ENCODE measurements at regions of chr19 and their contacts with region 1.

Region 1: GRCh38 chr19:2016041-2016807 is 710 bp upstream of the BTBD2 start:
- DNase-seq: peak in 9 of 10 donors; percentile 39 to 77 (median 67)
- H3K4me3 ChIP-seq: peak overlapping the region in 55 of 59 donors; percentile 12 to 73 (median 46)
- H3K27ac ChIP-seq: peak overlapping the region in 57 of 59 donors; percentile 41 to 94 (median 82)
- H3K27me3 ChIP-seq: no peaks in the 10 kb centered on the region
- CTCF ChIP-seq: no peak

Region 2: DNA sequence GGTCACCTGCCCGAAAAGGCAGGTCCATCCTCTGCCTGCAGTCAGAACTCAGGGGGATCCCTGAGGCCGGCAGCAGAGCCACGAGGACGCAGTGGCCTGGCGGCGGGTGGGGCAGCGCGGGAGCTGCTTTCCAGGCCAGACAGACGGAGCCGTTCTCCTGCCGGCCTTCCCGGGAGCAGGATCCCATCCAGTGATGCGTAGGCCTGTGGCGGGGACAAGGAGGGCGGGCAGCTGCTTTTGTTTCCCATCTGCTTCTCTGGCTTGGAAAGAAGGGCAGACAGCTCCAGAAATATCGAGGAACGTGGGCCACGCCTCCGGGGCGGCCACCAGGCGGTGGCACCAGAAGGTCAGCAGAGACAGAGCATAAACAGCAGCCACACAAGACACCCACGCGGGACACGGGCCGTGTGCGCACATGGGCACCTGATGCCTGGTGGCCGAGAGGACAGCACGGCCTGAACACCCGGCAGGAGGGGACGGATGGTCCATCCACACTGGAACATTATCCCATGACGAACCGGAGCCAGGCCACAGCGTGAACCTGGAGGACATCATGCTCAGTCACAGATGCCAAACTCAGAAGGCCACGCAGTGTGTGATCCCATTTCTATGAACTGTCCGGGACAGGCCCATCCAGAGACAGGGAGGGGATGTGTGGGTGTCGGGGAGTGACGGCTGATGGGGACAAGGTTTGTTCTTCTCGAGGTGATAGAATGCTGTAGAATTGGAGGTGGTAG is 48.7 kb after region 1 on chr19:
- intact Hi-C with region 1: loop called (anchors 1 to 5 kb)
- DNase-seq: peak in 7 of 10 donors; percentile 53 to 92 (median 69)
- H3K4me3 ChIP-seq: peak overlapping the region in 23 of 59 donors; percentile 1 to 46 (median 19)
- H3K27ac ChIP-seq: peak overlapping the region in 58 of 59 donors; percentile 19 to 100 (median 78)
- H3K27me3 ChIP-seq: no peaks in the 10 kb centered on the region
- CTCF ChIP-seq: peak in 22 of 56 donors; percentile 7 to 51 (median 23)